MCF 10A (cell line): ENCODE measurements at regions of chr1 and their contacts with region 1.

Region 1: GRCh38 chr1:169106095-169106920 is at the start of gene ATP1B1:
- DNase-seq: peak; percentile 92
- H3K4me3 Mint-ChIP-seq: peak within 1 kb of the TSS; percentile 80
- H3K27ac Mint-ChIP-seq: peak within 1 kb of the TSS; percentile 96
- H3K4me1 Mint-ChIP-seq: peaks cover 49% of the 10 kb centered on the region
- H3K27me3 Mint-ChIP-seq: no peaks in the 10 kb centered on the region
- CTCF ChIP-seq: peak; percentile 60
- total RNA-seq, gene ATP1B1: 20.0 and 24.4 TPM in 2 replicates

Region 2: DNA sequence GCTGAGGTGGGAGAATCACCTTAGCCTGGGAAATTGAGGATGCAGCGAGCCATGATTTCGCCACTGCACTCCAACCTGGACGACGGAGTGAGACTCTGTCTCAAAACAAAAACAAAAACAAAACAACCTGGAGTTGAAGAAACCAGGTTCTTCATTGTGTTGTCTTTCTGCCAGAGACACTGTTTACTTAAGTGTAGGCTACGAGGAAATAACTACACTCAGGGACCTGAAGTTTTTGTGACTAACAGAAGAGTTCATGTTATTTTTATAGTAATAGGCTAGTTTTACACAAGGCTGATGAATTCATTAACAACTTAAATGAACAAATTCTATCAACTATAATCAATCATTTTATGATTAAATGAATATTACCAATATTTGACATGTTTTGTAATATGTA is 1071.0 kb before region 1 on chr1:
- CTCF ChIA-PET with region 1: no interaction called
- POLR2A ChIA-PET with region 1: no interaction called
- intact Hi-C with region 1: no loop called
- DNase-seq: no peak
- H3K4me3 Mint-ChIP-seq: no peak overlapping the region
- H3K27ac Mint-ChIP-seq: no peak overlapping the region
- H3K4me1 Mint-ChIP-seq: no peaks in the 10 kb centered on the region
- H3K27me3 Mint-ChIP-seq: no peaks in the 10 kb centered on the region
- CTCF ChIP-seq: no peak

Region 3: GRCh38 chr1:168709405-168710305 is 396.7 kb before region 1 on chr1:
- CTCF ChIA-PET with region 1: interaction called, 5 read pairs
- POLR2A ChIA-PET with region 1: interaction called, 3 read pairs
- intact Hi-C with region 1: loop called (anchors 1 kb)
- DNase-seq: peak; percentile 97
- H3K4me3 Mint-ChIP-seq: peak overlapping the region; percentile 1
- H3K27ac Mint-ChIP-seq: peak overlapping the region; percentile 80
- H3K4me1 Mint-ChIP-seq: peaks cover 33% of the 10 kb centered on the region
- H3K27me3 Mint-ChIP-seq: no peaks in the 10 kb centered on the region
- CTCF ChIP-seq: no peak

Region 4: DNA sequence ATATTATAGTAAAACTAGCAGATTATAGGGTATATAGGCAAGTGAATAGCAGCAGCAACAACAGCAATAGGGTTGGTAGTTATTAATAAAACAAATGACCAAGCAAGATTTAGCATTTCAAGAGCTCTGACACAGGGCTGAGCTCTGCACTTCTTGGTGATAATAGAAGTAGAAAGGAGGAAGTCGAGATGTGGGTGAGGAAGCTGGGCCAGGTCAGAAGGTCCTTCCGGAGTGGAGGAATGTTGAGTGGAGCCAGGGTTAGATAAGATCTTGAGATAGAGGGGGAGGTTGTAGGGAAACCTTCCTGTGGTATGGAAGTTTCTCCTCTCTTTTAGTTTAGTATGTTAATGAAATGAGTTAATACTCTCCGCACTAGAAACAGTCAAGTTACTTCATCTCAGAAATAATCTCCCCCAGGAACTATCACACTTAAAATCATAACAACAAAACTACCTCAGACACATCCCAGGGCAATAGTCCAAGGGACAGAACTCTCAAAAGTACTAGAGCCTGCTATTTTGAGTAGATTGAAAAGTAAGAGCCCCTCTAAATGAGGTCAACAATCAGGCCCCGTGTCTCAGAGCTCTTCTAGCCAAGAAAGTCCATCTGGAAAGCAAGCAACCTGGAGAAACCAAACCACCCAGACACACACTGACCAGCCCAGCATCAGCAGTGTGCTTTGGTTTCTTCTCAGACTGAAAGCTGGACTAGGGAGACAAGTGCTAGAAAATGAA is 45.2 kb before region 1 on chr1:
- CTCF ChIA-PET with region 1: interaction called, 8 read pairs
- POLR2A ChIA-PET with region 1: interaction called, 51 read pairs
- intact Hi-C with region 1: loop called (anchors 2 kb)
- DNase-seq: no peak
- H3K4me3 Mint-ChIP-seq: no peak overlapping the region
- H3K27ac Mint-ChIP-seq: peak overlapping the region; percentile 79
- H3K4me1 Mint-ChIP-seq: peaks cover 23% of the 10 kb centered on the region
- H3K27me3 Mint-ChIP-seq: no peaks in the 10 kb centered on the region
- CTCF ChIP-seq: no peak

Region 5: GRCh38 chr1:169094897-169095569 is 11.3 kb before region 1 on chr1:
- CTCF ChIA-PET with region 1: interaction called, 12 read pairs
- POLR2A ChIA-PET with region 1: interaction called, 11 read pairs
- intact Hi-C with region 1: no loop called
- DNase-seq: no peak
- H3K4me3 Mint-ChIP-seq: no peak overlapping the region
- H3K27ac Mint-ChIP-seq: no peak overlapping the region
- H3K4me1 Mint-ChIP-seq: no peaks in the 10 kb centered on the region
- H3K27me3 Mint-ChIP-seq: no peaks in the 10 kb centered on the region
- CTCF ChIP-seq: no peak